B cell (primary cell): ENCODE measurements at regions of chr1 and their contacts with region 1.

Region 1: GRCh38 chr1:181166377-181167196 is 78.1 kb downstream of the IER5 start:
- DNase-seq: peak; percentile 82
- ATAC-seq: peak; percentile 99
- H3K4me3 ChIP-seq: no peak overlapping the region
- H3K4me3 Mint-ChIP-seq: no peak overlapping the region
- H3K27ac ChIP-seq: no peak overlapping the region
- H3K27ac Mint-ChIP-seq: no peak overlapping the region
- H3K4me1 ChIP-seq: peaks cover 2 to 6% of the 10 kb centered on the region in 2 donors
- H3K4me1 Mint-ChIP-seq: peaks cover 3% of the 10 kb centered on the region
- H3K27me3 ChIP-seq: peaks cover 0 to 2% (median 0%) of the 10 kb centered on the region in 4 experiments
- H3K27me3 Mint-ChIP-seq: no peaks in the 10 kb centered on the region
- CTCF ChIP-seq: peak; percentile 94

Region 2: DNA sequence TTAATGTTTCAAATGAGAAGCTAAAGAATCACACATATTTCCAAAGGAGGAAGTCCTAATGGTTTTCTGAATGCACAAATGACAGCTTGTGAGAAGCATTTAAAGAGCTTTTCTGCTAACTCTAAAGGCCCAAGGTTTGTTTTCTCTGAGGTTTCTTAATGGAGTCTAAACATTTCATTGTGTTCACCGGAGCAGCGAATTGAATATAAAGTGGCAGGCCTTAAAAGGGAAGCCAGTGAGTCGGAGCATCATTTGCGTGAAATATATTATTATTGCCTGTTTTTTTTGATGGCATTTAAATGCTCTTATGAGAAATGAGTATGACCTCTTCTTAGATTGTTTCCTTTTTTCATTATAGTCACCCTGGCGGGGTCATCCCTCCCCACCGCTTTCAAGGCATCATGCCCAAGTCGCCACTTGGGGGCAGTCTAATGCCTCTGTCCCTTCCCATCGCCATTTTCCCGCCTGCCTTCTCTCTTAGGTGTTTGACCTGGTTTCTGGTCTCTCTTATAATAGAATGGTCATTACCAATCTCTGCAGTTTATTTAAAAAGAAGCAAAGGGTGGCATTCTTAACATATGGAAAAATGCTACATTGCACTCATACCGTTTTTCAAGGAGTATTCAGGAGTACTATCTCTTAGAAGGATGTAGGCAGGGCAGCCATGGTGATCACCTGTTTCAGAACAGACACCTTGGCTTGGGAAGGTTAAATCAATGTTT is 633.2 kb before region 1 on chr1:
- CTCF ChIA-PET with region 1: interaction called, 9 read pairs
- POLR2A ChIA-PET with region 1: no interaction called
- intact Hi-C with region 1: loop called (anchors 1 kb)
- DNase-seq: peak; percentile 68
- ATAC-seq: no peak
- H3K4me3 ChIP-seq: no peak overlapping the region
- H3K4me3 Mint-ChIP-seq: no peak overlapping the region
- H3K27ac ChIP-seq: no peak overlapping the region
- H3K27ac Mint-ChIP-seq: no peak overlapping the region
- H3K4me1 ChIP-seq: no peaks in the 10 kb centered on the region
- H3K4me1 Mint-ChIP-seq: no peaks in the 10 kb centered on the region
- H3K27me3 ChIP-seq: peaks cover 0 to 4% (median 0%) of the 10 kb centered on the region in 4 experiments
- H3K27me3 Mint-ChIP-seq: peaks cover 6% of the 10 kb centered on the region
- CTCF ChIP-seq: peak; percentile 77

Region 3: DNA sequence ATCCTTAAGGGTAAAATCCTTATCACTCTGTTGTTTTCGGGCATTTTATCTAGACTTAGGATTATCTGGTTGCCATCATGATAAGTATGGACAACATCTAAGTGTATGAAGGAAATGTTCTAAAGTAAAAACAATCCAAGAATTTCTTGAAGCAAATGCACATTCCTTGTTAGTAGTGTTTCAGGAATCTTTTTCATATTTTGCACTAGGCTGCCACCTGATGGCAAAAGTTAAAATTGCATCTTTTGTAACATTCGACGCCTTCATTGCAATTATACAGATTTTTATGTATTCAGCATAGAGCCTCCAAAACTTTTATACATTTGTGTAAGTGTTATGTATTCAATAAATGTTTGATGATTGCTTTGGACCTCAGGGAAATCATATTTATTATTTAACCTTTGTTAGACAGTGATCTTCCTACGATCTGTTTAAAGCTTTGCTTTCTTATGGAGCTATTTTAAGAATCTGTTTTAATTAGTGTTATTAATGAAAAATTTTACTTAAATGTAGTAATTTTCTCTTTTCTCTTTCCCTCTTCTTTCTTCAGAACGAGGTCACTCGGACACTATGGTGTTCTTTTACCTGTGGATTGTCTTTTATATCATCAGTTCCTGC is 303.3 kb before region 1 on chr1:
- CTCF ChIA-PET with region 1: interaction called, 14 read pairs
- POLR2A ChIA-PET with region 1: no interaction called
- intact Hi-C with region 1: loop called (anchors 5 kb)
- DNase-seq: peak; percentile 64
- ATAC-seq: no peak
- H3K4me3 ChIP-seq: no peak overlapping the region
- H3K4me3 Mint-ChIP-seq: no peak overlapping the region
- H3K27ac ChIP-seq: no peak overlapping the region
- H3K27ac Mint-ChIP-seq: no peak overlapping the region
- H3K4me1 ChIP-seq: no peaks in the 10 kb centered on the region
- H3K4me1 Mint-ChIP-seq: no peaks in the 10 kb centered on the region
- H3K27me3 ChIP-seq: no peaks in the 10 kb centered on the region
- H3K27me3 Mint-ChIP-seq: no peaks in the 10 kb centered on the region
- CTCF ChIP-seq: peak; percentile 90

Region 4: GRCh38 chr1:180881806-180882509 is 284.6 kb before region 1 on chr1:
- CTCF ChIA-PET with region 1: interaction called, 37 read pairs
- POLR2A ChIA-PET with region 1: no interaction called
- intact Hi-C with region 1: loop called (anchors 1 kb)
- DNase-seq: peak; percentile 37
- ATAC-seq: no peak
- H3K4me3 ChIP-seq: no peak overlapping the region
- H3K4me3 Mint-ChIP-seq: no peak overlapping the region
- H3K27ac ChIP-seq: no peak overlapping the region
- H3K27ac Mint-ChIP-seq: no peak overlapping the region
- H3K4me1 ChIP-seq: no peaks in the 10 kb centered on the region
- H3K4me1 Mint-ChIP-seq: no peaks in the 10 kb centered on the region
- H3K27me3 ChIP-seq: no peaks in the 10 kb centered on the region
- H3K27me3 Mint-ChIP-seq: no peaks in the 10 kb centered on the region
- CTCF ChIP-seq: peak; percentile 47

Region 5: GRCh38 chr1:181033799-181034451 is 132.7 kb before region 1 on chr1 and contains the start of gene MR1:
- CTCF ChIA-PET with region 1: interaction called, 17 read pairs
- POLR2A ChIA-PET with region 1: no interaction called
- intact Hi-C with region 1: loop called (anchors 1 kb)
- DNase-seq: peak; percentile 92
- ATAC-seq: peak; percentile 97
- H3K4me3 ChIP-seq: peak within 1 kb of the TSS; percentile 77 to 94 (median 90)
- H3K4me3 Mint-ChIP-seq: peak within 1 kb of the TSS; percentile 95
- H3K27ac ChIP-seq: peak within 1 kb of the TSS; percentile 94 to 96
- H3K27ac Mint-ChIP-seq: peak within 1 kb of the TSS; percentile 93
- H3K4me1 ChIP-seq: peaks cover 39 to 49% of the 10 kb centered on the region in 2 donors
- H3K4me1 Mint-ChIP-seq: peaks cover 54% of the 10 kb centered on the region
- H3K27me3 ChIP-seq: no peaks in the 10 kb centered on the region
- H3K27me3 Mint-ChIP-seq: no peaks in the 10 kb centered on the region
- CTCF ChIP-seq: no peak
- total RNA-seq, gene MR1: 26.1 and 28.2 TPM in 2 replicates

Region 6: GRCh38 chr1:181152892-181153633 is 13.5 kb before region 1 on chr1:
- CTCF ChIA-PET with region 1: interaction called, 67 read pairs
- POLR2A ChIA-PET with region 1: interaction called, 7 read pairs
- intact Hi-C with region 1: no loop called
- DNase-seq: peak; percentile 80
- ATAC-seq: peak; percentile 87
- H3K4me3 ChIP-seq: no peak overlapping the region
- H3K4me3 Mint-ChIP-seq: peak overlapping the region; percentile 54
- H3K27ac ChIP-seq: no peak overlapping the region
- H3K27ac Mint-ChIP-seq: peak overlapping the region; percentile 39
- H3K4me1 ChIP-seq: peaks cover 35 to 45% of the 10 kb centered on the region in 2 donors
- H3K4me1 Mint-ChIP-seq: peaks cover 49% of the 10 kb centered on the region
- H3K27me3 ChIP-seq: no peaks in the 10 kb centered on the region
- H3K27me3 Mint-ChIP-seq: no peaks in the 10 kb centered on the region
- CTCF ChIP-seq: peak; percentile 56